ENCODE measurements at regions of chr20 and their contacts with region 1.

Region 1: GRCh38 chr20:62793912-62794724 is 2.2 kb upstream of the MRGBP start:
- DNase-seq: peak; percentile 85 to 100 (median 93)
- ATAC-seq: peak; percentile 87
- H3K4me3 ChIP-seq: peak overlapping the region; percentile 78
- H3K4me3 Mint-ChIP-seq: peak overlapping the region; percentile 78 to 95 (median 87)
- H3K27ac ChIP-seq: peak overlapping the region; percentile 83
- H3K27ac Mint-ChIP-seq: peak overlapping the region; percentile 86 to 97 (median 92)
- H3K4me1 ChIP-seq: peaks cover 15 to 24% of the 10 kb centered on the region in 2 donors
- H3K4me1 Mint-ChIP-seq: peaks cover 26 to 44% (median 41%) of the 10 kb centered on the region in 7 donors
- H3K27me3 ChIP-seq: no peaks in the 10 kb centered on the region
- H3K27me3 Mint-ChIP-seq: peaks cover 0 to 3% (median 0%) of the 10 kb centered on the region in 5 donors

Region 2: DNA sequence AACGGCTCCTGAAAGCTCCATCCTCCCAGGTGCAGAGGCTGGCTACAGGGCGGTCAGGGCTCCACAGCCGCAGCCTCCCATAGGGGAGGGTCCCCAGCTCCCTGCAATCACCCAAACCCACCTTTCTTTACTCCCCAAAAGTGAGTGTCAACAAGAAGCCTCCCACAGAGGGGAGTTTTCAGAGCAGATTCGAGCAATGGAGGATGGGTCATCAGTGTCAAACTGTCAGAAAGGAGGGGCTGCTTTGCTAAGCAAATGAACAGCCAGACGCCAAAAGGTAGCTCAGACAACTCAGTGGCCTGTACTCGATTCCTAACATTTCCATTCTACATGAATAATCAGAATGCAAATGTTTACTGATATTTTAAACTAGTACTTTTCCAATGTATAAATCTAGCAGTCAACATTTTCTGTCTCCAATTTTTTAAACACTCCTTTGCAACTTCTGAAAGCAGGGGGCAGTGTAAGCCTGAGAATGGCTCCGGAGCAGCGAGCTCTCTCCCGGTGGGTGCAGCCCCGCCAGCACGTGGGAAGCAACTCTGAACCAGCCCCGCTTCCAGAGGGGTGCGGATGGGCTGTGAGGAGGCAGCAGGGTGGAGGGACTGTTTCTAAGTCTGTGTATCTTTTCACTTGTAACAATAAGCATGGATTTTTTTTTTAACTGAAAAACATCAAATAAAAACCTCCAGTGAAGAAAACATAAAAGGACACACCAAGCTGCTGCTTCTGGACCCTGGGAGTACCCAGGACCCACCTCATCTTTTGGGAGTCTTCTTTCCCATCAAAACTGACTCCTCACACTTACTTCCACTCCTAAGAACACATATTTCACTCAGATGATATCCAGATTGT is 783.3 kb before region 1 on chr20:
- CTCF ChIA-PET with region 1: no interaction called
- POLR2A ChIA-PET with region 1: no interaction called
- intact Hi-C with region 1: no loop called
- DNase-seq: peak; percentile 36 to 70 (median 66)
- ATAC-seq: peak; percentile 81
- H3K4me3 ChIP-seq: no peak overlapping the region
- H3K4me3 Mint-ChIP-seq: peak overlapping the region in 1 of 10 donors; percentile 6
- H3K27ac ChIP-seq: no peak overlapping the region
- H3K27ac Mint-ChIP-seq: peak overlapping the region in 6 of 9 donors; percentile 6 to 65 (median 43)
- H3K4me1 ChIP-seq: peaks cover 0 to 4% of the 10 kb centered on the region in 2 donors
- H3K4me1 Mint-ChIP-seq: peaks cover 6 to 24% (median 10%) of the 10 kb centered on the region in 7 donors
- H3K27me3 ChIP-seq: no peaks in the 10 kb centered on the region
- H3K27me3 Mint-ChIP-seq: no peaks in the 10 kb centered on the region

Region 3: GRCh38 chr20:62237801-62238571 is 556.1 kb before region 1 on chr20 and contains the start of gene OSBPL2:
- CTCF ChIA-PET with region 1: no interaction called
- POLR2A ChIA-PET with region 1: no interaction called
- intact Hi-C with region 1: loop called in 1 of 2 experiments (anchors 1 kb)
- DNase-seq: peak; percentile 99 to 100 (median 100)
- ATAC-seq: peak; percentile 99
- H3K4me3 ChIP-seq: peak within 1 kb of the TSS; percentile 48
- H3K4me3 Mint-ChIP-seq: peak within 1 kb of the TSS; percentile 82 to 90 (median 87)
- H3K27ac ChIP-seq: peak within 1 kb of the TSS; percentile 79
- H3K27ac Mint-ChIP-seq: peak within 1 kb of the TSS; percentile 85 to 97 (median 94)
- H3K4me1 ChIP-seq: peaks cover 10 to 22% of the 10 kb centered on the region in 2 donors
- H3K4me1 Mint-ChIP-seq: peaks cover 27 to 47% (median 39%) of the 10 kb centered on the region in 7 donors
- H3K27me3 ChIP-seq: no peaks in the 10 kb centered on the region
- H3K27me3 Mint-ChIP-seq: peaks cover 0 to 5% (median 4%) of the 10 kb centered on the region in 5 donors
- total RNA-seq, gene OSBPL2: 37.6 to 80.8 (median 69.3) TPM

Region 4: DNA sequence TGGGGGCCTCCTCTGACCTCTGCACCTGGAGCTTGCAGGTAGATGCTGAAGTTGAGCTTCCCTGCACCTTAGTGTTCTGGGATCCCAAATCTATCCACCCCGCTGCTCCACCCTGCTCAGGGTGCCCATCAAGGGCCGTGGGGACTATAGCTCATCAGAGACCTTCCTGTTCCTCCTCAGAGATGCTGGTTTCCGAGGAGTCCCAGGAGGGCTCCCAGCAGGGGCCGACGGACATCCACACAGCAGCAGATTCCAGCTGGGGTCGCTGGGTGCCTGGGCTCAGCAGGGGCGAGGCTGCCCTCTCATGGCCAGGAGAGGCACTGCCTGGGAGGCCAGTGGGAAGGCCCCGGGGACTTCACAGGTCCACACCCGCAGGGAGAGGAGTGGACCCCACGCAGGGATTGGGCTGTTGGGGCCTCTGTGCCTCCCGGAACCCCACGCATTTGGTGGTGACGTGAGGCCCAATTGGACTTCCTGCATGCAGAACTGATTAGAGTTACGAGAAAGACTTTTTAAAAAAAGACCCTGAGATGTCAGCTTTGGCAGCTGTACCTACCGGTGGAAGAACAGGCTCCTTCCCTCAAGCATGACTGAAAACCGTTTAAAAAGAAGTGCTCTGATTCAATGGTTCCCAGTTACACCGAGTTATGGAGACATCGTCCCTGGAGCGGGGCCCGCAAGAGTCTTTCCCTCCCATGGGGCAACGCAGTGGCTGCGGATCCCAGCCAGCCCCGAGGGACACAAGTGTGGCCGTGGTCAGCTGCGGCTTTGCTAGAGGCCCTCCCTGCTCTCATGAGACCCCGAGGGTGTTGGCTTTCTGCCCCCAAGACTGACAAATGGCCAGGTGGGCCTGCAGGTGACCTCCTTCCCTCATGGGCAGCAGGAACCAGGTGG is 177.1 kb before region 1 on chr20:
- CTCF ChIA-PET with region 1: interaction called, 3 read pairs
- POLR2A ChIA-PET with region 1: no interaction called
- intact Hi-C with region 1: loop called (anchors 1 to 5 kb)
- DNase-seq: peak; percentile 42 to 82 (median 57)
- ATAC-seq: peak; percentile 86
- H3K4me3 ChIP-seq: no peak overlapping the region
- H3K4me3 Mint-ChIP-seq: peak overlapping the region in 4 of 10 donors; percentile 42 to 82 (median 64)
- H3K27ac ChIP-seq: no peak overlapping the region
- H3K27ac Mint-ChIP-seq: peak overlapping the region in 5 of 9 donors; percentile 28 to 90 (median 72)
- H3K4me1 ChIP-seq: peaks cover 16 to 27% of the 10 kb centered on the region in 2 donors
- H3K4me1 Mint-ChIP-seq: peaks cover 7 to 35% (median 19%) of the 10 kb centered on the region in 7 donors
- H3K27me3 ChIP-seq: no peaks in the 10 kb centered on the region
- H3K27me3 Mint-ChIP-seq: peaks cover 0 to 9% (median 0%) of the 10 kb centered on the region in 5 donors

Region 5: DNA sequence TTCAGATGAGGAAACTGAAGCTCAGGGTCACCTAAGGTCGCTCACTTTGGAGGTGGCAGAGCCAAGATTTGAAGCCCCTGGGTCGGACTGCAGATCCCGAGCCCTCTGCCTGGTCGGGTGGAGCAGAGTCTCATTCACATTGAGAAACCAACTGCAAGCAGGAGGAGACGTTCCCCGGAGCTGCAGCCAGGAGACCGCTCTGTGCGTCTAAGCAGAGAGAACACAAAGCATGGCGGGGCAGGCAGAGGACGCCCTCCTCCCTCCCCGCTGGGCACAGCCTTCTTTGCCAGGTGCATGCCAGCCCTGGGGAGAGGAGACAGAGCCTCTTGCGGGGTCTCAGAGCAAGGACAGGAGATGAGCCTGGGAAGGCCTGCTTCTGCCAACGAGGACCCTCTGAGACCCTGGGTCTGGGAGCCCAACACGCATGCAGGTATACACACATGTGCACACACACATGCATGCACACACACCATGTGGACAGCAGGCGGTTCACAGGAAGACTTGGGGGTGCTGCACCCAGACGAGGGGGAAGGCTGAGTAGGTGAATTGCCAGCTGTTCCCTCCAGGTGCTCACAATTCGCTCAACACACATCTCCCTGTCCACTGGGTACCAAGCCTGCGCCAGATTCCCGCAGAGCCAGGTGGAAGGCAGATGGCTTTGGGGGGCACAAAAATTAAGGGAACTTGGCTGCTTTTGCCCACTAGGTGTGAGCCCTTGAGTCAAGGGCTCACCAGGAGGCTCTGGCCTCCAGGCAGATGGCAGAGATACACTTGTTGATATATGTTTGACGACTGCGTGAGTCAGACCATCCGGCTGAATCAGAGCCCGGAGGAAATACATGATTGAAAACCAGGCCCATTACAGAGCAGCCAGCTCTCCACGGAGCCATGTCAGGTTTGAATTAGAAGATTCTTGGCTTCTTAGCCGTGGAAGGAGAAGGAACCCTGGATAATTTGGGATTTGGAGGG is 90.9 kb before region 1 on chr20:
- CTCF ChIA-PET with region 1: no interaction called
- POLR2A ChIA-PET with region 1: no interaction called
- intact Hi-C with region 1: loop called in 1 of 2 experiments (anchors 1 kb)
- DNase-seq: no peak
- ATAC-seq: peak; percentile 67
- H3K4me3 ChIP-seq: no peak overlapping the region
- H3K4me3 Mint-ChIP-seq: no peak overlapping the region
- H3K27ac ChIP-seq: no peak overlapping the region
- H3K27ac Mint-ChIP-seq: peak overlapping the region in 1 of 9 donors; percentile 64
- H3K4me1 ChIP-seq: peaks cover 0 to 4% of the 10 kb centered on the region in 2 donors
- H3K4me1 Mint-ChIP-seq: peaks cover 0 to 9% (median 5%) of the 10 kb centered on the region in 7 donors
- H3K27me3 ChIP-seq: peaks cover 0 to 5% of the 10 kb centered on the region in 2 donors
- H3K27me3 Mint-ChIP-seq: peaks cover 3 to 19% (median 4%) of the 10 kb centered on the region in 5 donors

Region 6: GRCh38 chr20:62808211-62808865 is 14.2 kb after region 1 on chr20:
- CTCF ChIA-PET with region 1: interaction called, 15 read pairs
- POLR2A ChIA-PET with region 1: interaction called, 65 read pairs
- intact Hi-C with region 1: loop called (anchors 1 kb)
- DNase-seq: peak; percentile 58 to 84 (median 71)
- ATAC-seq: peak; percentile 70
- H3K4me3 ChIP-seq: no peak overlapping the region
- H3K4me3 Mint-ChIP-seq: peak overlapping the region in 9 of 10 donors; percentile 18 to 82 (median 57)
- H3K27ac ChIP-seq: peak overlapping the region; percentile 22
- H3K27ac Mint-ChIP-seq: peak overlapping the region in 7 of 9 donors; percentile 13 to 88 (median 65)
- H3K4me1 ChIP-seq: peaks cover 16 to 30% of the 10 kb centered on the region in 2 donors
- H3K4me1 Mint-ChIP-seq: peaks cover 16 to 33% (median 25%) of the 10 kb centered on the region in 7 donors
- H3K27me3 ChIP-seq: no peaks in the 10 kb centered on the region
- H3K27me3 Mint-ChIP-seq: no peaks in the 10 kb centered on the region

Region 7: GRCh38 chr20:62832212-62832922 is 38.2 kb after region 1 on chr20:
- CTCF ChIA-PET with region 1: no interaction called
- POLR2A ChIA-PET with region 1: no interaction called
- intact Hi-C with region 1: no loop called
- DNase-seq: no peak
- ATAC-seq: peak; percentile 24
- H3K4me3 ChIP-seq: no peak overlapping the region
- H3K4me3 Mint-ChIP-seq: peak overlapping the region in 4 of 10 donors; percentile 2 to 52 (median 34)
- H3K27ac ChIP-seq: no peak overlapping the region
- H3K27ac Mint-ChIP-seq: peak overlapping the region in 3 of 9 donors; percentile 43 to 79 (median 72)
- H3K4me1 ChIP-seq: no peaks in the 10 kb centered on the region
- H3K4me1 Mint-ChIP-seq: peaks cover 0 to 16% (median 12%) of the 10 kb centered on the region in 7 donors
- H3K27me3 ChIP-seq: no peaks in the 10 kb centered on the region
- H3K27me3 Mint-ChIP-seq: peaks cover 0 to 5% (median 0%) of the 10 kb centered on the region in 5 donors

Region 8: GRCh38 chr20:63178889-63179686 is 385.0 kb after region 1 on chr20:
- CTCF ChIA-PET with region 1: no interaction called
- POLR2A ChIA-PET with region 1: no interaction called
- intact Hi-C with region 1: no loop called
- DNase-seq: peak; percentile 48 to 71 (median 67)
- ATAC-seq: peak; percentile 80
- H3K4me3 ChIP-seq: peak overlapping the region; percentile 33
- H3K4me3 Mint-ChIP-seq: peak overlapping the region in 8 of 10 donors; percentile 23 to 78 (median 66)
- H3K27ac ChIP-seq: no peak overlapping the region
- H3K27ac Mint-ChIP-seq: peak overlapping the region in 2 of 9 donors; percentile 14 to 76
- H3K4me1 ChIP-seq: peaks cover 0 to 6% of the 10 kb centered on the region in 2 donors
- H3K4me1 Mint-ChIP-seq: peaks cover 0 to 17% (median 8%) of the 10 kb centered on the region in 7 donors
- H3K27me3 ChIP-seq: peaks cover 3 to 16% of the 10 kb centered on the region in 2 donors
- H3K27me3 Mint-ChIP-seq: peaks cover 10 to 50% (median 33%) of the 10 kb centered on the region in 5 donors

Region 9: GRCh38 chr20:63216041-63216848 is 422.1 kb after region 1 on chr20 and contains the start of gene YTHDF1:
- CTCF ChIA-PET with region 1: no interaction called
- POLR2A ChIA-PET with region 1: no interaction called
- intact Hi-C with region 1: loop called in 1 of 2 experiments (anchors 2 kb)
- DNase-seq: peak; percentile 93 to 98 (median 96)
- ATAC-seq: peak; percentile 97
- H3K4me3 ChIP-seq: peak within 1 kb of the TSS; percentile 78
- H3K4me3 Mint-ChIP-seq: peak within 1 kb of the TSS; percentile 88 to 97 (median 92)
- H3K27ac ChIP-seq: peak within 1 kb of the TSS; percentile 95
- H3K27ac Mint-ChIP-seq: peak within 1 kb of the TSS; percentile 86 to 96 (median 91)
- H3K4me1 ChIP-seq: peaks cover 10 to 39% of the 10 kb centered on the region in 2 donors
- H3K4me1 Mint-ChIP-seq: peaks cover 34 to 49% (median 46%) of the 10 kb centered on the region in 7 donors
- H3K27me3 ChIP-seq: no peaks in the 10 kb centered on the region
- H3K27me3 Mint-ChIP-seq: peaks cover 0 to 6% (median 0%) of the 10 kb centered on the region in 5 donors
- total RNA-seq, gene YTHDF1: 35.9 to 52.1 (median 42.0) TPM

Measured in naive thymus-derived CD4-positive, alpha-beta T cell (primary cell).